Transverse colon (tissue), 4 donors: ENCODE measurements at regions of chr9 and their contacts with region 1.

Region 1: GRCh38 chr9:76490249-76490990 is 31.4 kb downstream of the GCNT1 start:
- DNase-seq: no peak
- H3K4me3 ChIP-seq: no peak overlapping the region
- H3K27ac ChIP-seq: no peak overlapping the region
- H3K4me1 ChIP-seq: no peaks in the 10 kb centered on the region
- H3K27me3 ChIP-seq: no peaks in the 10 kb centered on the region
- CTCF ChIP-seq: no peak
- EP300 ChIP-seq: no peak
- POLR2A ChIP-seq: no peak

Region 2: DNA sequence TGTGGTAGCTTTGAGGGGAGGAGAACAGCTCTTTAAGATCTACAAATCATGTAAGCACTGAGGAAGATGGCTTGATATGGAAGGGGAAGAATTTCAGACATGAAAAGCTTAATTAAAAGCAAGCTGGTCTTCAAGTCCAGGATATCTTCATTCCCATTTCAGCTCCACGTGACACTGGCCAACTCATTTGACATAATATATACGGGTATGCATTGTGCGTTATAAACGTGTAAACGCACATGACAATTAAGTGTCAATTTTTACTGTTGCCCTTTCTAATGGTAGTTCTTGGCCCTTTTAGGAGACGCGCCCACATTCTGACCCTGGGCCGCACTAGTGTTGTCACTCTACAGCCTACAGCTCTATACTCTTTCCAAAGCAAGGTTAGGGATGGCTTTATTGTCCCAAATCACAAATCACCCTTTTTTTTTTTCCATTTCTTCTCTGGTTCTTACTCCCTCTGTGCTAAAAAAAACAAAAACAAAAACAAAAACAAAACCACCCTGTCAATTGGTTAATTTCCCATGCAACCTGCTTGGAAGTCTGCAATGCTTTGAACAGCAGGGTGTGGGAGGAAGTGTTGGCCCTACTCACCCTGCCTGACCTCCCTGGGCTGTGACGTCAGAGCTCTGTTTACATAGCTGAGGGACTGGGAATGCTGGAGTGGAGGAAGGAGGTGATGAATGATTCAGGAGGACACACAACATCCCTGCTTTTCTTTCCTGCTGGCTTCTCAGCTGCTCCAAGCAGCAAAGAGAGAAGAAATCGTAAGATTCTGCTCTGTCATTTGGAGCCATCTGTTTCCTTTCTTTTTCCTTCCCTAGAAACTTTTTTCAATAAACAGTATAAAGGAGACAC is 115.5 kb before region 1 on chr9:
- in situ Hi-C with region 1: no loop called
- intact Hi-C with region 1: no loop called
- DNase-seq: peak; percentile 92
- H3K4me3 ChIP-seq: no peak overlapping the region
- H3K27ac ChIP-seq: peak overlapping the region; percentile 69 to 84 (median 76)
- H3K4me1 ChIP-seq: peaks cover 20 to 51% (median 40%) of the 10 kb centered on the region in 4 donors
- H3K27me3 ChIP-seq: no peaks in the 10 kb centered on the region
- CTCF ChIP-seq: no peak
- EP300 ChIP-seq: peak; percentile 39
- POLR2A ChIP-seq: peak; percentile 12

Region 3: DNA sequence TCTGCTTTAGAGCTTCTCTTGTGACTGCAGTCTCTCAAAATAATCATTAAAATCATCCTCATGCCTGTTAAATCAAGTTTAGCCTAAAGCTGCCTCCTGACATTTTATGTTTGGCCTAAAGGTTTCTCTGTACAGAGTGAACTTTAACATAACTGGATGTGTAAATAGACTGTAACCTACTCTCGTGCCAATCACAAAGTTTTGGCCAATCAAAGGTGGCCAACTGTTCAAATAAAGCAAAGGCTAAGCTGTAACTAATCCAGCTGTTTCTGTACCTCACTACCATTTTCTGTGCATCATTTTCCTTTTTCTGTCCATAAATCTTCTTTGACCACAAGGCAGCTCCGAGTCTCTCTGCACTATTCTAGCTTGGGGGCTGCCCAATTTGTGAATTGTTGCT is 54.8 kb after region 1 on chr9:
- in situ Hi-C with region 1: no loop called
- intact Hi-C with region 1: loop called (anchors 2 kb)
- DNase-seq: peak; percentile 26
- H3K4me3 ChIP-seq: no peak overlapping the region
- H3K27ac ChIP-seq: peak overlapping the region in 3 of 4 donors; percentile 34 to 49 (median 38)
- H3K4me1 ChIP-seq: peaks cover 0 to 15% (median 0%) of the 10 kb centered on the region in 4 donors
- H3K27me3 ChIP-seq: no peaks in the 10 kb centered on the region
- CTCF ChIP-seq: no peak
- EP300 ChIP-seq: no peak
- POLR2A ChIP-seq: no peak

Region 4: DNA sequence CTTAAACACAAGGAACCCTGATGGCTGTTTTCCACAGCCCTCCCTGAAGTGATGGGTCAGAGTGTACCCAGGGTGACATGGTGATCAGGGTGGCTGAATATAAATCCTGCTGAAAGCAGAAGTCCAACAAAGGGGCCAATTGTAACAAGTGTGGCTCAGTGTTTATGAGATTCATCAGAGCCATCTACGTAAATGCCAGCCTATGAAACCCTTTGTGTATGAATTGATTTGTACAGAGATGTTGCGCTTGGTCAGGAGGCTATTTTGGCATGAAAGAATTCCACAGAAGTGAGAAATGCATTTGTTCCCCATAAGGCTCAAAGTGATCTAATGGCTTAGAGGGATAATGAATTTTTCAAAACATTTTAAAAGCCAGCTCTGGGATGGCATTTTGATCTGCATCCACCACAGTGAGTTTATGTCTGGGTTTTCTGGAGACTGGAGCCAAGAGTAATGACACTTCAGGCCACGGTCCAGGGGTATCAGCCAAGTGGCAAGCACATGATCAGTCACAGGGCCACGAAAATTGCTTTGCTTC is 403.0 kb after region 1 on chr9:
- in situ Hi-C with region 1: no loop called
- intact Hi-C with region 1: no loop called
- DNase-seq: no peak
- H3K4me3 ChIP-seq: no peak overlapping the region
- H3K27ac ChIP-seq: peak overlapping the region; percentile 53 to 91 (median 81)
- H3K4me1 ChIP-seq: peaks cover 15 to 20% (median 17%) of the 10 kb centered on the region in 4 donors
- H3K27me3 ChIP-seq: no peaks in the 10 kb centered on the region
- CTCF ChIP-seq: no peak
- EP300 ChIP-seq: peak; percentile 88
- POLR2A ChIP-seq: no peak